Vagina (tissue), 2 donors: ENCODE measurements at regions of chrX and their contacts with region 1.

Region 1: DNA sequence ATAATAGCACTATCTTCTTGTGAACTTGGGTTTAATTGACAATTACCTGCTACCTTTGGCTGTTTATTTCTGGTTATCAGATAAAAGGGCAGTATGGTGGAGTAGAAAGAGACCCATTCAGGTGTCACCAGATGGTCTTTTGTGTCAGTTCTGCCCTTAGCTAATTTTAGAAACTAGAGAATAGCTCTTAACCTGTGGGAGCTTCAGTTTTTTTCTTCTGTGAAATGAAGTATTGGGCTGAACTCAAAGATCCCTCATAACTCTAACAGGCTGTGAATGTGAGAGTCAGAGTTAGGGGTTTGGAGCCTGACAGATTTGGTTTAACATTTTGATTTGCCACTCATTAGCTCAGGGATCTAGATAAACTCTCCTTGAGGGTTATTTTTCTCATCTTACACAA is 335.2 kb downstream of the PPP1R2C start:
- DNase-seq: no peak
- H3K4me3 ChIP-seq: no peak overlapping the region
- H3K27ac ChIP-seq: no peak overlapping the region
- H3K4me1 ChIP-seq: no peaks in the 10 kb centered on the region
- H3K27me3 ChIP-seq: no peaks in the 10 kb centered on the region
- CTCF ChIP-seq: no peak
- POLR2A ChIP-seq: no peak

Region 2: GRCh38 chrX:42432552-42432951 is 10.2 kb before region 1 on chrX:
- intact Hi-C with region 1: loop called (anchors 1 kb)
- DNase-seq: no peak
- H3K4me3 ChIP-seq: no peak overlapping the region
- H3K27ac ChIP-seq: no peak overlapping the region
- H3K4me1 ChIP-seq: no peaks in the 10 kb centered on the region
- H3K27me3 ChIP-seq: no peaks in the 10 kb centered on the region
- CTCF ChIP-seq: no peak
- POLR2A ChIP-seq: no peak

Region 3: GRCh38 chrX:42485621-42486020 is 42.9 kb after region 1 on chrX:
- intact Hi-C with region 1: no loop called
- DNase-seq: no peak
- H3K4me3 ChIP-seq: no peak overlapping the region
- H3K27ac ChIP-seq: no peak overlapping the region
- H3K4me1 ChIP-seq: no peaks in the 10 kb centered on the region
- H3K27me3 ChIP-seq: no peaks in the 10 kb centered on the region
- CTCF ChIP-seq: no peak
- POLR2A ChIP-seq: no peak